Body of pancreas (tissue), 4 donors: ENCODE measurements at regions of chr5 and their contacts with region 1.

Region 1: GRCh38 chr5:135546932-135547331 is 11.2 kb upstream of the NEUROG1 start:
- DNase-seq: no peak
- ATAC-seq: no peak
- H3K4me3 ChIP-seq: no peak overlapping the region
- H3K27ac ChIP-seq: no peak overlapping the region
- H3K4me1 ChIP-seq: peaks cover 21% of the 10 kb centered on the region
- H3K27me3 ChIP-seq: peaks cover 0 to 22% of the 10 kb centered on the region in 2 donors
- CTCF ChIP-seq: no peak
- POLR2A ChIP-seq: no peak

Region 2: GRCh38 chr5:135462304-135462703 is 84.6 kb before region 1 on chr5:
- intact Hi-C with region 1: loop called (anchors 5 kb)
- DNase-seq: peak in 3 of 4 donors; percentile 18 to 43 (median 42)
- ATAC-seq: no peak
- H3K4me3 ChIP-seq: no peak overlapping the region
- H3K27ac ChIP-seq: no peak overlapping the region
- H3K4me1 ChIP-seq: peaks cover 10% of the 10 kb centered on the region
- H3K27me3 ChIP-seq: no peaks in the 10 kb centered on the region
- CTCF ChIP-seq: peak in 6 of 7 experiments; percentile 5 to 35 (median 18)
- POLR2A ChIP-seq: no peak